ENCODE measurements at regions of chr20 and their contacts with region 1.

Region 1: DNA sequence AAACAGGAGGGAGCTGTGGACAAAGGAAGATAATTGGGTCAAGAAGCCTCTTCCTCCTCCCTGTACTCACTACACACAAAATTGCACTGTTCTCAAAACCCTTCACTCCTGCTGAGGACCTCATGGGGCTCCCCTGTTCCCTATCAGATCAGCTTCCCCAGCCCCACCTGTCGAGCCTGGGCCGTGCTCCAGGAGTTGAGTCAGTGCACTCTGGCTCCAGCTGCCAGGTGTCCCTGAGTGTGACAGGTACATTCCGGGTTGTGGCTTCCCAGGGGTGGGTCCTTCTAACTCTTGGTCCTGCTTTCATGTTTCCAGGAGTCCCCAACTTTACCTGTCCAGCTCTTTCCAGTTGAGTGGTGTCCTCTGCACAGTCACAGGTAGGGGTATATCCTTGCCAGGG is 8.4 kb downstream of the RAB5IF start:
- DNase-seq: no peak
- ATAC-seq: no peak

Region 2: GRCh38 chr20:36408219-36408618 is 205.8 kb before region 1 on chr20:
- intact Hi-C with region 1: no loop called
- DNase-seq: no peak
- ATAC-seq: no peak

Region 3: DNA sequence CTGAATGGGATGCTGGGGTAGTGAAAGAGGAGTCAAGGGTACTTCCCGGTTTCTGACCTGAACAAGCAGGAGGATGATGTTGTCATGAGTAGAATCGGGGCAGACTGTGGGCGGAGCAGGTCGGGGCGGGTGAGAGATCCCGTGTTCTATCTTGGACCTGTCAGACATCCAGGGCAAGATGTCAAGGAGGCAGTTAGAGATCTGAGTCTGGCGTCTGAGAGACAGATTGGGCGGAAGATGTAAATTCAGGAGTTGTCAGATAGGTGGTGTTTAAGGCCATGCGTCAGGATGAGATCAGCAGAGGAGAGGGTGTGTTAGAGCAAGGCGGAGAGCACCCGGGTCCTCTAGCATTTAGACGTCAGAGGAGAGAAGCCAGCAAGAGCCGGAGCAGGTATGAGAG is 192.3 kb before region 1 on chr20:
- intact Hi-C with region 1: no loop called
- DNase-seq: no peak
- ATAC-seq: no peak

Region 4: GRCh38 chr20:36886859-36887751 is 273.1 kb after region 1 on chr20:
- intact Hi-C with region 1: loop called (anchors 5 kb)
- DNase-seq: peak; percentile 81
- ATAC-seq: peak; percentile 80

Measured in Right ventricle myocardium inferior (tissue), 1 donor.